ENCODE measurements at regions of chr17 and their contacts with region 1.

Region 1: GRCh38 chr17:60677308-60678124 is at the start of gene BCAS3:
- DNase-seq: peak; percentile 99
- H3K4me3 ChIP-seq: peak within 1 kb of the TSS; percentile 68 to 87 (median 69)
- H3K27ac ChIP-seq: peak within 1 kb of the TSS; percentile 58
- H3K4me1 ChIP-seq: peaks cover 8% of the 10 kb centered on the region
- H3K27me3 ChIP-seq: no peaks in the 10 kb centered on the region
- CTCF ChIP-seq: no peak
- total RNA-seq, gene BCAS3: 20.1 to 36.3 TPM

Region 2: GRCh38 chr17:60599620-60600489 is 77.7 kb before region 1 on chr17 and contains the start of gene PPM1D:
- CTCF ChIA-PET with region 1: interaction called, 6 read pairs
- dilution Hi-C with region 1: no loop called
- in situ Hi-C with region 1: no loop called
- intact Hi-C with region 1: loop called (anchors 2 kb)
- DNase-seq: peak; percentile 98
- H3K4me3 ChIP-seq: peak within 1 kb of the TSS; percentile 75 to 90 (median 87)
- H3K27ac ChIP-seq: peak within 1 kb of the TSS; percentile 77
- H3K4me1 ChIP-seq: peaks cover 12% of the 10 kb centered on the region
- H3K27me3 ChIP-seq: no peaks in the 10 kb centered on the region
- CTCF ChIP-seq: no peak
- total RNA-seq, gene PPM1D: 9.3 to 9.5 TPM